ENCODE measurements at regions of chr15 and their contacts with region 1.

Region 1: GRCh38 chr15:62726461-62726860 is 316.1 kb upstream of the TPM1 start:
- DNase-seq: peak; percentile 88
- H3K4me3 ChIP-seq: no peak overlapping the region
- H3K27ac ChIP-seq: peak overlapping the region; percentile 33
- H3K4me1 ChIP-seq: peaks cover 24% of the 10 kb centered on the region
- H3K27me3 ChIP-seq: no peaks in the 10 kb centered on the region
- CTCF ChIP-seq: no peak

Region 2: GRCh38 chr15:62742409-62743171 is 16.1 kb after region 1 on chr15:
- CTCF ChIA-PET with region 1: interaction called, 16 read pairs
- POLR2A ChIA-PET with region 1: no interaction called
- intact Hi-C with region 1: no loop called
- DNase-seq: peak; percentile 79
- H3K4me3 ChIP-seq: no peak overlapping the region
- H3K27ac ChIP-seq: no peak overlapping the region
- H3K4me1 ChIP-seq: peaks cover 35% of the 10 kb centered on the region
- H3K27me3 ChIP-seq: no peaks in the 10 kb centered on the region
- CTCF ChIP-seq: peak; percentile 93

Measured in A673 (cell line).